ENCODE measurements at regions of chr12 and their contacts with region 1.

Region 1: GRCh38 chr12:107105410-107105703 is 12.0 kb upstream of the CRY1 start:
- DNase-seq: no peak
- H3K4me3 Mint-ChIP-seq: no peak overlapping the region
- H3K27ac Mint-ChIP-seq: no peak overlapping the region
- H3K4me1 Mint-ChIP-seq: no peaks in the 10 kb centered on the region
- H3K27me3 Mint-ChIP-seq: peaks cover 22% of the 10 kb centered on the region

Region 2: DNA sequence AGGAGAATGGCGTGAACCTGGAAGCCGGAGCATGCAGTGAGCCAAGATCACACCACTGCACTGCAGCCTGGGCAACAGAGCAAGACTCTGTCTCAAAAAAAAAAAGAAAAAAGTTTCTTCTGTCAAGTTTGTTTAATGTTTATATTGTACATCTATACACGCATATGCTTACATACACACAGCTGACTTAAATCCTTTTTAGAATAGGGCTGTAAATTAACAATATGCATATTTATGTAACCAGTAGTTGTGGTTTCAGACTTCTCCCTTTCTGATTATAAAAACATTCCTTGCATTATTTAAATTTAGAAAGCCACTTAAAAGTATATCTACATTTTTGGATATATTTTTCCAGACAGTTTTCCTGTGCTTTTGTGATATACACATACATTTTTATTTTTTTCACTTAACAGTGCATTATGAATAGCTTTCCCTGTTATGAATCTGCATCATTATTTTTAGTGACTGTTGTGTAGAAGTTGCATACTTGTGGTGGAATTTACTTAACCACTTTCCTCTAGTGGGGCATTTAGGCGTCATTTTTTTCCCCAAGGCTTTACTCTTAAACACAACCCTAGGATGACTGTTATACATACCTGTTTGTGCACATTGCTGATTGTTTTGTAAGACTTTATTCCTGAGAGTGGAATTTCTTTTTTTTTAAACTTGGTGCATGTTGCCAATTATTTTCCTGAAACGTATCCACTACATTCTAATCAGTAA is 718.4 kb before region 1 on chr12:
- intact Hi-C with region 1: loop called (anchors 1 kb)
- DNase-seq: no peak
- H3K4me3 Mint-ChIP-seq: no peak overlapping the region
- H3K27ac Mint-ChIP-seq: no peak overlapping the region
- H3K4me1 Mint-ChIP-seq: no peaks in the 10 kb centered on the region
- H3K27me3 Mint-ChIP-seq: no peaks in the 10 kb centered on the region

Region 3: DNA sequence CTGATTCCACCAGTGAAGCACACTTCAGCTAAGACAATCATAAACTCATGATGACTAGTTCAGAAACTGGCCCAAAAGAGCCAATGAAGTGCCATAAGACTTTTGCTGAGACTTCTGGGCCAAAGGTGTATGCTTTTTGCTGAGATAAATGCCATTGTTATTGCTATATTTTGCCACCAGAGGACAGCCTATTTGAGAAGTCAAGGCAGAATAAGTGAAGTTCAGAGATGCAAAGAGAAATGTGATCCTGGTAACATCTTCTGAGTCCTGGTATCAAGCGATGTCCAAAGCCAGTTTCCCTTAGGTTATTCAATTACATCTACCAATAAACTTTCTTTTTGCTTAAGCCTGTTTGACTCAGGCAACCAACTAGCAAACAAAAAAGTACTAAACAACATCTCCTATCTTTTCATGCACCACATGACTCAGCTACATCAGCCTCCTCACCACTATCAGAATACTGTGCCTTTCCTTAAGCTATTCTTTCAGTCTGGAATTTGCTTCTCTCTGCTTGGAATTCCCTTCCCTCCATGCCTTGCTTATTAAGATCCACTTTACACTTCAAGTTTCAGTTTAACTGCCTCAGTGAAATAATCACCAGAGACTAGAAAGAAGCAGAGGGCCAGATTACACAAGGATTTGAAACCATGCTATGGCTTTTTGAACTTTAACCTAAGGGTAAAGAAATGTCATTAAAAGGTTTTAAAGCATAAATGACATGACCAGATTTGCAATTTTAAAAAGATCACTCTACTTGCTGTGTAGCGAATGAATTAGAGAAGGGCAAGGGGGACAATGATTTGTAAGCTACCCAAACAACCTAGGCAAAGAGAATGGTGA is 26.0 kb before region 1 on chr12:
- intact Hi-C with region 1: loop called (anchors 1 kb)
- DNase-seq: no peak
- H3K4me3 Mint-ChIP-seq: no peak overlapping the region
- H3K27ac Mint-ChIP-seq: no peak overlapping the region
- H3K4me1 Mint-ChIP-seq: no peaks in the 10 kb centered on the region
- H3K27me3 Mint-ChIP-seq: peaks cover 8% of the 10 kb centered on the region